Activated CD4-positive, alpha-beta T cell treated with anti-CD3 and anti-CD28 coated beads for 36 hours (primary cell): ENCODE measurements at regions of chr1 and their contacts with region 1.

Region 1: GRCh38 chr1:182054698-182055326 is 6.7 kb downstream of the ZNF648 start:
- DNase-seq: peak; percentile 75
- ATAC-seq: peak; percentile 44
- H3K4me3 Mint-ChIP-seq: no peak overlapping the region
- H3K27ac Mint-ChIP-seq: no peak overlapping the region
- H3K4me1 Mint-ChIP-seq: peaks cover 7% of the 10 kb centered on the region
- H3K27me3 Mint-ChIP-seq: peaks cover 28% of the 10 kb centered on the region

Region 2: GRCh38 chr1:181469829-181470228 is 585.0 kb before region 1 on chr1:
- CTCF ChIA-PET with region 1: no interaction called
- POLR2A ChIA-PET with region 1: no interaction called
- intact Hi-C with region 1: no loop called
- DNase-seq: no peak
- ATAC-seq: no peak
- H3K4me3 Mint-ChIP-seq: no peak overlapping the region
- H3K27ac Mint-ChIP-seq: no peak overlapping the region
- H3K4me1 Mint-ChIP-seq: no peaks in the 10 kb centered on the region
- H3K27me3 Mint-ChIP-seq: peaks cover 25% of the 10 kb centered on the region

Region 3: DNA sequence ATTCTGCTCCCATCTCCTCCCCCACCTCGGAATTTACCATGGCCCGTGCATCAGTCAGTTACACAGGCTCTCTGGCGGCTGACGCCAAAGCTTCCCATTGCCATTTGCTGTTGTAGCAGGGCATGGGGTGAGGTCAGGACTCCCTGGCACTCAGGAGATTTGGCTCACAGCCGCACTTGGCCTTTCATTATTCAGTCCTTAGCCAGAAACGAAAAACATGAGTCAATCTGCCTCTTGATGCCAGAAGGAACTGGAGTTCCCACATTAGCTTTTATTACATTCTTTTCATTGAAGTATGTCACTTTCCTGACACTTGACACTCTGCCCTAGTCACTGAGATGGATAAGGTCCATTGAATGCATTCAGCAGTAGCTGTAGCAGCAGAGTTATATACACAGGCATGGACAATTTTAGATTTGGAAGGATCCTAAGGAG is 310.9 kb before region 1 on chr1:
- CTCF ChIA-PET with region 1: no interaction called
- POLR2A ChIA-PET with region 1: no interaction called
- intact Hi-C with region 1: loop called in 1 of 2 experiments (anchors 10 kb)
- DNase-seq: no peak
- ATAC-seq: no peak
- H3K4me3 Mint-ChIP-seq: no peak overlapping the region
- H3K27ac Mint-ChIP-seq: no peak overlapping the region
- H3K4me1 Mint-ChIP-seq: no peaks in the 10 kb centered on the region
- H3K27me3 Mint-ChIP-seq: peaks cover 4% of the 10 kb centered on the region

Region 4: GRCh38 chr1:181953596-181953995 is 101.2 kb before region 1 on chr1:
- CTCF ChIA-PET with region 1: no interaction called
- POLR2A ChIA-PET with region 1: no interaction called
- intact Hi-C with region 1: no loop called
- DNase-seq: no peak
- ATAC-seq: no peak
- H3K4me3 Mint-ChIP-seq: no peak overlapping the region
- H3K27ac Mint-ChIP-seq: no peak overlapping the region
- H3K4me1 Mint-ChIP-seq: no peaks in the 10 kb centered on the region
- H3K27me3 Mint-ChIP-seq: peaks cover 4% of the 10 kb centered on the region

Region 5: GRCh38 chr1:182069028-182069466 is 14.2 kb after region 1 on chr1:
- CTCF ChIA-PET with region 1: interaction called, 15 read pairs
- POLR2A ChIA-PET with region 1: no interaction called
- intact Hi-C with region 1: no loop called
- DNase-seq: peak; percentile 64
- ATAC-seq: peak; percentile 87
- H3K4me3 Mint-ChIP-seq: no peak overlapping the region
- H3K27ac Mint-ChIP-seq: no peak overlapping the region
- H3K4me1 Mint-ChIP-seq: no peaks in the 10 kb centered on the region
- H3K27me3 Mint-ChIP-seq: peaks cover 15% of the 10 kb centered on the region

Region 6: DNA sequence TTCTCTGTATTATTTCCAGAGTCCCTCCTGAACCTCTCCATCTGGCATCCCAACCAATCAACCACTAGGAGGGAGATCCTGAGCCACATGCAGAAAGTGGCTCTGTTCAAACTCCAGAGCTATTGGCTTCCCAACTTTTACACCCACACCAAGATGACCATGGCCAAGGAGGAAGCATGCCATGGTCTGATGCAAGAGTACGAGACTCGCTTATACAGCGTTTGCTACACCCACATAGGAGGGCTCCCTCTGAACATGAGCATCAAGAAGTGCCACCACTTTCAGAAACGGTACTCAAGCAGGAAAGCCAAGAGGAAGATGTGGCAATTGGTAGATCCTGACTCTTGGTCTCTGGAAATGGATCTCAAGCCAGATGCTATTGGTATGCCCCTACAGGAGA is 418.7 kb after region 1 on chr1:
- CTCF ChIA-PET with region 1: no interaction called
- POLR2A ChIA-PET with region 1: no interaction called
- intact Hi-C with region 1: no loop called
- DNase-seq: no peak
- ATAC-seq: no peak
- H3K4me3 Mint-ChIP-seq: no peak overlapping the region
- H3K27ac Mint-ChIP-seq: no peak overlapping the region
- H3K4me1 Mint-ChIP-seq: no peaks in the 10 kb centered on the region
- H3K27me3 Mint-ChIP-seq: peaks cover 22% of the 10 kb centered on the region